Colonic mucosa (tissue), 4 donors: ENCODE measurements at regions of chr6 and their contacts with region 1.

Region 1: GRCh38 chr6:52233975-52234823 is 10.1 kb downstream of the IL17F start:
- DNase-seq: peak; percentile 42
- H3K4me3 ChIP-seq: no peak overlapping the region
- H3K27ac ChIP-seq: no peak overlapping the region
- H3K4me1 ChIP-seq: no peaks in the 10 kb centered on the region
- H3K27me3 ChIP-seq: no peaks in the 10 kb centered on the region
- CTCF ChIP-seq: peak; percentile 47

Region 2: GRCh38 chr6:52063584-52064344 is 170.4 kb before region 1 on chr6:
- intact Hi-C with region 1: loop called (anchors 5 kb)
- DNase-seq: peak; percentile 50
- H3K4me3 ChIP-seq: no peak overlapping the region
- H3K27ac ChIP-seq: no peak overlapping the region
- H3K4me1 ChIP-seq: no peaks in the 10 kb centered on the region
- H3K27me3 ChIP-seq: no peaks in the 10 kb centered on the region
- CTCF ChIP-seq: peak; percentile 44

Region 3: DNA sequence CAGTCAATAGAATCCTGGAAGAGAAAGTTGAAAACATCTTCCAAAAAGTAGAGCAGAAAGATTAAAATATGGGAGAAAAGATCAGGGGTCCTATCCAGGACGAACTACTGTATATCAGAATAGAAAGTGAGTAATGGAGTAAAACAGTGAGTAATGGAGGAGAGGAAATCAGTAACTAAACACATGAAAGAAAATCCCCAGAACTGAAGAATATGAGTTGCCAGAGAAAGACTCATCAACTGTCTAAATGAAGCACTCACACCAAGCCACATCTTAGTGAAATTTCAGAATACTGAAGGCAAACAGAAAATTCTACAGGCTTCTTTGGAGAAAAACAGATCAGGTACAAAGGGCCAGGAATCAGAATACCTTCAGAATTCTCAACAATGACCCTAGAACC is 33.2 kb before region 1 on chr6:
- intact Hi-C with region 1: no loop called
- DNase-seq: no peak
- H3K4me3 ChIP-seq: no peak overlapping the region
- H3K27ac ChIP-seq: no peak overlapping the region
- H3K4me1 ChIP-seq: no peaks in the 10 kb centered on the region
- H3K27me3 ChIP-seq: no peaks in the 10 kb centered on the region
- CTCF ChIP-seq: no peak

Region 4: DNA sequence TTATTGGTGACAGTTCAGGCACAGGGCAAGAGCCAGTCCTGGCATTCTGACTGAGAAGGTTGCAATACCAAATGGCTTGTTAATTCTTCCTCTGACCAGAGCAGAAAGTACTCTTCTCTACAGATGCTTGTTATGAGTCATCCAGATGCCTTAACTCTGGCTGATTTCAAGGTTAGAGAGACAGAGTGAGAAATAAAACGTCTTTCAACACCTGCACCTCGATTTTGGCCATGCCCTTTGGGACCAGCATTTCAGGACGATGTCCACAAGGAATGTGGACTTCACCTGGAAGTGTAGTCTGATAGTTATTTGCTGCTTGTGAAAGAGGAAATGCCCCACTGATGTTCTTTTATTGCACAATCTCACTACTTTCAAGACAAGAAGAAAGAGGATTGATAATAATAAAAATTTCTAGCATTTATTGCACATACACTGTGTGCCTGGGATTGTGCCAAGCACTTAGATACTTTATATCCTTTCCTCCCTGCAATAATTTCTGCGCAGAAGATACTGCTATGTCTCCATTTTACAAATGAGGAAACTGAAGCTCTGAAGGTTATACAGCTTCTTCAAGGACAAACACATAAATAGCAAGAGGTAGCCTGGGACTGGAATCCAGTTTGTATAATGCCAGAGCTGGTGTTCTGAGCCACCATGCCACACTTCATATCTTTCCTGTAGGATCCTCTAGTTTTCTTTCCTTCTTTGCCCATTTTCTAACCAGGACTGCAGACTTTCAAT is 83.8 kb after region 1 on chr6:
- intact Hi-C with region 1: no loop called
- DNase-seq: no peak
- H3K4me3 ChIP-seq: no peak overlapping the region
- H3K27ac ChIP-seq: peak overlapping the region; percentile 45
- H3K4me1 ChIP-seq: peaks cover 14% of the 10 kb centered on the region
- H3K27me3 ChIP-seq: no peaks in the 10 kb centered on the region
- CTCF ChIP-seq: no peak